WTC11 (cell line): ENCODE measurements at regions of chr9 and their contacts with region 1.

Region 1: GRCh38 chr9:93827545-93828330 is 127.4 kb downstream of the BARX1 start:
- DNase-seq: peak; percentile 81
- ATAC-seq: peak; percentile 91
- H3K4me3 Mint-ChIP-seq: peak overlapping the region; percentile 30
- H3K27ac Mint-ChIP-seq: no peak overlapping the region
- H3K4me1 Mint-ChIP-seq: peaks cover 13% of the 10 kb centered on the region
- H3K27me3 Mint-ChIP-seq: peaks cover 7% of the 10 kb centered on the region
- CTCF ChIP-seq: peak; percentile 87

Region 2: DNA sequence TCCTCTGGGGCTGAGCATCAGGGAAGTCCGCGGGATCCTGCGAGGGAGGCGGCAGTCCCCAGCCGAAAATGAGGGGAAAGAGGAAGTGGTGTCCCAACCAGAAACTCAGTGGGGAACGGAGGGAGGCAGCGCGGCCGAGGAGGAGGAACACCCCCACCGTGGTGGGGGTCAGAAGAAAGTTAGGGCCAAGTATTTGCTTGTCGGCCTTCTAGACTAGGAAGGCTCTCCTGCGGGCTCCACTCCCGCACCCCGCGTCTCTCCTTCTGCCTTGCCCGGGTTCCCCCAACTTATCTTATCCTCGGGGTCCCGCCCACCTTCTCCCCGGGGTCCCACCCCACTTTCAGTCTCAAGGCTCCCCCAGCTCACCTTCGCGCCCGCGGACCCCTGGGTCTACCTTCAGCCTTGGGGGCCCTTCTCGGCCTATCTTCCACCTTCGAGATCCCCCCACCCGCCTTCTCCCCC is 251.9 kb before region 1 on chr9:
- CTCF ChIA-PET with region 1: no interaction called
- POLR2A ChIA-PET with region 1: no interaction called
- DNase-seq: no peak
- ATAC-seq: peak; percentile 4
- H3K4me3 Mint-ChIP-seq: peak overlapping the region; percentile 84
- H3K27ac Mint-ChIP-seq: no peak overlapping the region
- H3K4me1 Mint-ChIP-seq: peaks cover 32% of the 10 kb centered on the region
- H3K27me3 Mint-ChIP-seq: peaks cover 21% of the 10 kb centered on the region
- CTCF ChIP-seq: no peak

Region 3: GRCh38 chr9:93682232-93682968 is 145.3 kb before region 1 on chr9:
- CTCF ChIA-PET with region 1: interaction called, 52 read pairs
- POLR2A ChIA-PET with region 1: no interaction called
- DNase-seq: peak; percentile 94
- ATAC-seq: peak; percentile 76
- H3K4me3 Mint-ChIP-seq: no peak overlapping the region
- H3K27ac Mint-ChIP-seq: 0 out of 2 replicates have a peak overlapping the region, but pooled peaks have one; percentile 21
- H3K4me1 Mint-ChIP-seq: peaks cover 3% of the 10 kb centered on the region
- H3K27me3 Mint-ChIP-seq: no peaks in the 10 kb centered on the region
- CTCF ChIP-seq: peak; percentile 89

Region 4: DNA sequence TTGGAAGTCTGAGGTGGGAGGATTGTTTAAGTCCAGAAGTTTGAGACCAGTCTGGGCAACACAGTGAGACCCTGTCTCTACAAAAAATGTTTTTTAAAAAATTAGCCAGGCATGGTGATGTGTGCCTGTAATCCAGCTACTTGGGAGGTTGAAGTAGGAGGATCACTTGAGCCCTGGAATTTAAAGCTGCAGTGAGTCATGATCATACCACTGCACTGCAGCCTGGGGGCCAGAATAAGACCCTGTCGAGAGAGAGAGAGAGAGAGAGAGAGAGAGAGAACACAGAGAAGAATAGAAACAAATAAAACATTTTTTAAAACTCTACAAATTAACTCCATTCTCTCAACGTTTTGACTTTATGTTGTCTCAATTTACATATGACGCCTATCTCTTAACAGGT is 15.7 kb after region 1 on chr9:
- CTCF ChIA-PET with region 1: interaction called, 20 read pairs
- POLR2A ChIA-PET with region 1: no interaction called
- DNase-seq: no peak
- ATAC-seq: no peak
- H3K4me3 Mint-ChIP-seq: no peak overlapping the region
- H3K27ac Mint-ChIP-seq: no peak overlapping the region
- H3K4me1 Mint-ChIP-seq: no peaks in the 10 kb centered on the region
- H3K27me3 Mint-ChIP-seq: peaks cover 6% of the 10 kb centered on the region
- CTCF ChIP-seq: no peak

Region 5: GRCh38 chr9:93908591-93909511 is 81.1 kb after region 1 on chr9:
- CTCF ChIA-PET with region 1: interaction called, 19 read pairs
- POLR2A ChIA-PET with region 1: no interaction called
- DNase-seq: no peak
- ATAC-seq: no peak
- H3K4me3 Mint-ChIP-seq: no peak overlapping the region
- H3K27ac Mint-ChIP-seq: no peak overlapping the region
- H3K4me1 Mint-ChIP-seq: peaks cover 15% of the 10 kb centered on the region
- H3K27me3 Mint-ChIP-seq: no peaks in the 10 kb centered on the region
- CTCF ChIP-seq: no peak

Region 6: DNA sequence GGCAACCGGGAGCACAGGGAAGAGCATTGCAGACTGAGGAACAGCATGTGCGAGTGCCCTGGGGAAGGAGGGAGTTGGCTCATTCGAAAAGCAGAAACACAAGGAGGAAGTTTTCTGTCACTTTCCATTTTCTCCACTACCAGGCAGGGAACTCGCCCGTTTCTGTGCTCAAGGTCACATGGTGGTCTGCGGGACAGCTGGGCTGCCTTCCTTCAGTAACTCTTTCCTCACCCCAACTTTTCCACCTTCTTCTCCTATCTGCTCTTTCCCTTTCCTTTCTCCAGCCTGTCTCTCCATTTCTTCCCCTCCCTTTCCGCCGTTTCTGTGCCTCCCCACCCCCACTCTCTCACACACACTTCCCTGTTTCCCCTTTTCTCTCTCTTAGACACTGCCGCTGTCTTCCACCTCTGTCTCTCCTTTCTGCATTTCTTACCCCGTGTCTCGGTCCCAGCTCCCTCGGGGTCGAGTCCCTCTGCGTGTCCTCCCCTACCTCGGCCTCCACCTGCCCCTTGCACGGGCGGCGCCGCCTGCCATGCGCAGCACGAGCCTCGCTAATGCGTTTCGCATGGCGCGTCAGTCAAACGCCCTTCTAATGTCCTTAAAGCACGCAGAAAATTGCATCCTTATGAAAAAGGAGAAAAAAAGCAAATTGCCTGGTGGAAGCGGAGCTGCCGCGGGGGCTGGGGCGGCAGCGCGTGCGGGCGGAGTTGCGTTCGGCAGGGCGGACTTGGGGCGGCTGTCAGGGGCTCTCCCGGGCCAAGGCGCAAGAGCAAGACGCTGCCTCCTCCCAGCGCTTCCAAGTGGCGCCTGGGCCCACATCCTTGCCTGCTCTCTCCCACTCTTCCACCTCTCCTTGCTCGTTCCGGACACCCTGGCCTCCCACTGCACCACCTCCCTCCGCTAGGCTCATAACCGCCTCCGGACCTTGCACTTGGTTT is 117.9 kb after region 1 on chr9:
- CTCF ChIA-PET with region 1: interaction called, 157 read pairs
- POLR2A ChIA-PET with region 1: no interaction called
- DNase-seq: no peak
- ATAC-seq: no peak; the same call in 1 of the 2 replicates
- H3K4me3 Mint-ChIP-seq: peak overlapping the region; percentile 69
- H3K27ac Mint-ChIP-seq: no peak overlapping the region
- H3K4me1 Mint-ChIP-seq: peaks cover 58% of the 10 kb centered on the region
- H3K27me3 Mint-ChIP-seq: peaks cover 99% of the 10 kb centered on the region
- CTCF ChIP-seq: no peak

Region 7: GRCh38 chr9:93962561-93963440 is 135.1 kb after region 1 on chr9:
- CTCF ChIA-PET with region 1: interaction called, 42 read pairs
- POLR2A ChIA-PET with region 1: no interaction called
- DNase-seq: peak; percentile 70
- ATAC-seq: peak; percentile 16; the same call in 1 of the 2 replicates
- H3K4me3 Mint-ChIP-seq: no peak overlapping the region
- H3K27ac Mint-ChIP-seq: no peak overlapping the region
- H3K4me1 Mint-ChIP-seq: peaks cover 30% of the 10 kb centered on the region
- H3K27me3 Mint-ChIP-seq: peaks cover 53% of the 10 kb centered on the region
- CTCF ChIP-seq: peak; percentile 88